Left ventricle myocardium superior (tissue), 1 donor: ENCODE measurements at regions of chr1 and their contacts with region 1.

Region 1: GRCh38 chr1:176691251-176692228 is 228.6 kb downstream of the PAPPA2 start:
- DNase-seq: no peak
- ATAC-seq: peak; percentile 65

Region 2: GRCh38 chr1:175364424-175365235 is 1326.9 kb before region 1 on chr1:
- intact Hi-C with region 1: no loop called
- DNase-seq: no peak
- ATAC-seq: no peak

Region 3: GRCh38 chr1:176843352-176844297 is 152.1 kb after region 1 on chr1:
- intact Hi-C with region 1: loop called (anchors 10 kb)
- DNase-seq: peak; percentile 39
- ATAC-seq: peak; percentile 55